AG04450 (cell line): ENCODE measurements at regions of chr11 and their contacts with region 1.

Region 1: GRCh38 chr11:72024069-72024754 is 25.5 kb downstream of the IL18BP start:
- DNase-seq: no peak
- H3K4me3 ChIP-seq: no peak overlapping the region
- H3K27ac ChIP-seq: no peak overlapping the region
- H3K27me3 ChIP-seq: no peaks in the 10 kb centered on the region
- CTCF ChIP-seq: no peak

Region 2: DNA sequence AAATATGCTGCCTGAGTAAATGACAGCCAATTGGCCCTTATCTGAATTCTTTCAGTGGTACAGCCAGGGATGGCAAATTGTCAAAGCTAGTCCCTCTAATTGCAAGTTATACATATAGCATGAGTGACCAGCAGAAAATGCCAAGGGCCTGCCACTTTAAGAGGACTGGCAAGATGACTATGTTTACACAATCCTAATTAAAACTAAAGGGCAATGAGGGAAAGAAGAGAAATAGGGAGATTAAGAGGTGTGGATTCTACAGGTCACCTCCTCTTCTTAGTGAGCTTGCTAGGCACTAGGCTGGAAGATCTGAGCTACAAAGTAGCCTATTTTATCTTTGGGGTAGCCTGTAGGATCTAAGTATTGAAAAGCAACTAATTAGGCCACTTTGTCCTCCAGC is 42.6 kb after region 1 on chr11:
- CTCF ChIA-PET with region 1: interaction called, 16 read pairs
- POLR2A ChIA-PET with region 1: no interaction called
- DNase-seq: no peak
- H3K4me3 ChIP-seq: no peak overlapping the region
- H3K27ac ChIP-seq: peak overlapping the region; percentile 3
- H3K27me3 ChIP-seq: no peaks in the 10 kb centered on the region
- CTCF ChIP-seq: no peak

Region 3: DNA sequence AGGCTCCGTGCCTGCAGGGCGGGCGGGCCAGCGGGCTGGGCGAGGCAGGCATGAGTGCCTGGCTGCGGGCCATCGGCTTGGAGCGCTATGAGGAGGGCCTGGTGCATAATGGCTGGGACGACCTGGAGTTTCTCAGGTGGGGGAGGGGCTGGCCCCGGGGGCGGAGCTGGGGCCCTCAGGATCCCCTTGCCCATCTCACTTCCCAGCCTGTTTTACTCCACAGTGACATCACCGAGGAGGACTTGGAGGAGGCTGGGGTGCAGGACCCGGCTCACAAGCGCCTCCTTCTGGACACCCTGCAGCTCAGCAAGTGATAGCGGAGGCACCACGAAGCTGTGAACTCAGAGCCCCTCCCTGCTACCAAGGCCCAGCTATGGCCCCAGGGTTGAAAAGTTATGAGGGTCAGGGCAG is 213.8 kb after region 1 on chr11:
- CTCF ChIA-PET with region 1: interaction called, 14 read pairs
- POLR2A ChIA-PET with region 1: interaction called, 3 read pairs
- DNase-seq: no peak
- H3K4me3 ChIP-seq: no peak overlapping the region
- H3K27ac ChIP-seq: no peak overlapping the region
- H3K27me3 ChIP-seq: peaks cover 27% of the 10 kb centered on the region
- CTCF ChIP-seq: peak; percentile 79

Region 4: GRCh38 chr11:72446902-72447769 is 422.9 kb after region 1 on chr11:
- CTCF ChIA-PET with region 1: interaction called, 12 read pairs
- POLR2A ChIA-PET with region 1: no interaction called
- DNase-seq: peak; percentile 24
- H3K4me3 ChIP-seq: no peak overlapping the region
- H3K27ac ChIP-seq: no peak overlapping the region
- H3K27me3 ChIP-seq: peaks cover 7% of the 10 kb centered on the region
- CTCF ChIP-seq: peak; percentile 82

Region 5: GRCh38 chr11:72598906-72599305 is 574.7 kb after region 1 on chr11:
- CTCF ChIA-PET with region 1: no interaction called
- POLR2A ChIA-PET with region 1: no interaction called
- DNase-seq: no peak
- H3K4me3 ChIP-seq: no peak overlapping the region
- H3K27ac ChIP-seq: no peak overlapping the region
- H3K27me3 ChIP-seq: peaks cover 53% of the 10 kb centered on the region
- CTCF ChIP-seq: peak; percentile 50